GM12878 (cell line): ENCODE measurements at regions of chr1 and their contacts with region 1.

Region 1: GRCh38 chr1:99969729-99970621 is at the start of gene SLC35A3:
- DNase-seq: peak; percentile 41
- ATAC-seq: peak; percentile 95
- H3K4me3 ChIP-seq: peak within 1 kb of the TSS; percentile 92
- H3K27ac ChIP-seq: peak within 1 kb of the TSS; percentile 68
- H3K4me1 ChIP-seq: no peaks in the 10 kb centered on the region
- H3K27me3 ChIP-seq: no peaks in the 10 kb centered on the region
- CTCF ChIP-seq: no peak
- EP300 ChIP-seq: no peak
- POLR2A ChIP-seq: peak; percentile 94
- RAD21 ChIP-seq: no peak
- polyA plus RNA-seq, gene SLC35A3: 3.6 to 4.9 TPM

Region 2: GRCh38 chr1:100132566-100133477 is 162.8 kb after region 1 on chr1 and contains the starts of genes SASS6 and TRMT13:
- CTCF ChIA-PET with region 1: interaction called, 3 read pairs
- POLR2A ChIA-PET with region 1: interaction called, 5 read pairs
- RAD21 ChIA-PET with region 1: interaction called, 10 read pairs
- SMC1A ChIA-PET with region 1: interaction called, 3 read pairs
- in situ Hi-C with region 1: no loop called
- intact Hi-C with region 1: loop called (anchors 1 kb)
- DNase-seq: peak; percentile 90
- ATAC-seq: peak; percentile 91
- H3K4me3 ChIP-seq: peak within 1 kb of the TSS; percentile 99
- H3K27ac ChIP-seq: peak within 1 kb of the TSS; percentile 83
- H3K4me1 ChIP-seq: peaks cover 11% of the 10 kb centered on the region
- H3K27me3 ChIP-seq: no peaks in the 10 kb centered on the region
- CTCF ChIP-seq: no peak
- EP300 ChIP-seq: peak in 1 of 2 experiments; percentile 43; a peak in 1 of 4 replicates
- POLR2A ChIP-seq: peak; percentile 80
- RAD21 ChIP-seq: no peak
- polyA plus RNA-seq, gene SASS6: 8.2 to 10.7 TPM
- polyA plus RNA-seq, gene TRMT13: 17.1 to 22.3 TPM